Tibial artery (tissue), 4 donors: ENCODE measurements at regions of chr12 and their contacts with region 1.

Region 1: DNA sequence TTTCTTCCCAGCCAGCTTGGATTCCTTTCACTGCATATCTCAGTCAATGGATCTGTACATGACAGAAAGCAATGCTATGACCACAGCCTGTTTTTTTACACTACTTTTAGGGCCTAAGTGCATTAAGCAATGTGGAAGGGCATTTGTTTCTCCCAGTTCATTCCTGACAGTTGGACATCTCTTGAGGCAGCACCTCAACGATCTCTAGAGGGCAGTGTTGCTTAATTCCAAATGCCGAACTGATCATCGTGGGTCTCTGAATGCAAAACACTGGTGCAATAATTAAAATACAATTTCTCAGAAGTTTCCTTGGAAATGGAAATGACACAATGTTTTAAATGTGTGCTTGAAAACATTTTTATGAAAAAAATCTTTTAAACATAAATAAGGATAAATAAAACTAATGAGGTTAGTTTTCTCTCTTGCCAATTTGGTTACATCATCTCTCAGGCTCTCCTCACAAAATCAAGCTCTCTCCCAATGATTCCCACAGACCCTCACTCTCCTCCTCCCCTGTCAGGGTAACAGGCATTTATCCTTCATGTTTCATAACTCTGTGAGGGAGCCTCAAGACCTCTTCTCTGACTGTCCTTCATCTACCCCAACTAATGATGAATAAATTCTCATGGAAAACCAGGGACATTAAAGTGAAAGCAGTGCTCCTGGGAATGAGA is 192.4 kb upstream of the SLC16A7 start:
- DNase-seq: peak; percentile 65 to 66
- H3K4me3 ChIP-seq: no peak overlapping the region
- H3K27ac ChIP-seq: peak overlapping the region in 1 of 2 donors; percentile 1
- H3K4me1 ChIP-seq: peaks cover 0 to 14% (median 2%) of the 10 kb centered on the region in 4 donors
- H3K27me3 ChIP-seq: no peaks in the 10 kb centered on the region
- CTCF ChIP-seq: peak; percentile 63 to 73

Region 2: GRCh38 chr12:59559696-59560095 is 156.3 kb after region 1 on chr12:
- intact Hi-C with region 1: no loop called
- DNase-seq: no peak
- H3K4me3 ChIP-seq: no peak overlapping the region
- H3K27ac ChIP-seq: no peak overlapping the region
- H3K4me1 ChIP-seq: no peaks in the 10 kb centered on the region
- H3K27me3 ChIP-seq: no peaks in the 10 kb centered on the region
- CTCF ChIP-seq: no peak

Region 3: GRCh38 chr12:59834659-59835474 is 431.5 kb after region 1 on chr12:
- intact Hi-C with region 1: loop called (anchors 10 kb)
- DNase-seq: no peak
- H3K4me3 ChIP-seq: no peak overlapping the region
- H3K27ac ChIP-seq: no peak overlapping the region
- H3K4me1 ChIP-seq: no peaks in the 10 kb centered on the region
- H3K27me3 ChIP-seq: no peaks in the 10 kb centered on the region
- CTCF ChIP-seq: peak; percentile 39